Activated CD4-positive, alpha-beta T cell treated with anti-CD3 and anti-CD28 coated beads for 36 hours (primary cell): ENCODE measurements at regions of chr1 and their contacts with region 1.

Region 1: GRCh38 chr1:181002582-181003172 is 20.0 kb downstream of the STX6 start:
- DNase-seq: no peak
- ATAC-seq: no peak
- H3K4me3 Mint-ChIP-seq: no peak overlapping the region
- H3K27ac Mint-ChIP-seq: no peak overlapping the region
- H3K4me1 Mint-ChIP-seq: peaks cover 4% of the 10 kb centered on the region
- H3K27me3 Mint-ChIP-seq: no peaks in the 10 kb centered on the region

Region 2: DNA sequence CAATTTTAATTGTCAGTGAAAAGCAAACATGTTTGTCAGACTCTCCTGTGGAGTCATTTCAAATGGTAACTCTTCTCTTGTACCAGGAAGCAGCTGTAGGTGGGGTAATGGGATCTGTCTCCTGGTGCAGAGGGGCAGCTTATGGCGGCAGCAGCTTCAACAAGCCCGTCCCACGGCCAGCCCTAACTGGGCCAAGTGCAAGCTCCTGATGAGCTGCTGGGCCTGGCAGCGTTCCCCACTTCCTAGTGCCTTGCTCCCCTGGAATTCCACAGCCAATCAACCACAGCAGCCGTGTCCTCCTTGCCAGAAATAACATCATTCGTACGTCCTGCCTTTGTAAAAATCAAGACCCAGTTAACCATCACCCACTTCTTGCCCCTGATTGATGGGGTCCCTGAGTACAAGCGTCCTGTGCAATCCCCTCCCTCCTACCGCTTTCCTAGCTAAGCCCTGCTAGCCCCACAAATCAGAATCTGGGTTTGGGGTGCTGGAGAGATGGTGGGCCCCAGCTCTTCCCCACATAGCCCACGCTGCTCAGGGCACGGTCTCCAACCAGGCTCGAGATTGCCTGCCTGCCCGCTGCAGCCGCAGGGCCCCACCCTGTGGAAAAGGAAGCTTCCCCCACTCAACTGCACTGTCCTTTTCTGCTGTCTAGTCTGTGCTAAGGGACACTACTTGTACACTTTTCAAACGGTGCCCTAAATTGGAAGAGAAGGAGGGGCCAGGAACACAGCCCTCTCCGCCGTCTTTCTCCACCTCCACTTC is 1186.3 kb before region 1 on chr1:
- CTCF ChIA-PET with region 1: no interaction called
- POLR2A ChIA-PET with region 1: no interaction called
- intact Hi-C with region 1: loop called in 1 of 2 experiments (anchors 5 kb)
- DNase-seq: no peak
- ATAC-seq: no peak
- H3K4me3 Mint-ChIP-seq: peak overlapping the region; percentile 84
- H3K27ac Mint-ChIP-seq: no peak overlapping the region
- H3K4me1 Mint-ChIP-seq: peaks cover 17% of the 10 kb centered on the region
- H3K27me3 Mint-ChIP-seq: no peaks in the 10 kb centered on the region

Region 3: DNA sequence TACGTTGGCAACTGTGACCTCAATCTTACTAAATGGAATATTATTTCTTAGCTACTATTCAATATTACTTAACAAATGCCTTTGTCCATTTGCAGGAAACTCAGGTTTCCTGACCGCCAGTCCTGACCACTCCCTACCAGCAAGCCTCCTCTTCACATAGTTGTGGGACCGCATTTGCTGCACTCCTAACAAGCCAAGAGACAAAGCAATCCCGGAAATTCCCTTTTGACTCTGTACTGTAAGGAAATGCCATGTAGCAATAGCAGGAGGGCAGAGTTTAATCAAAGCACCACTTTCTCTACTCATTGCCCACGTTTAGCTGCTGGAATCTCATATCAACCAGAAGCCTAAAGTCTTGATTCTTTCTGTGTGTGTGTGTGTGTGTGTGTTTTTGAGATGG is 472.2 kb before region 1 on chr1:
- CTCF ChIA-PET with region 1: no interaction called
- POLR2A ChIA-PET with region 1: no interaction called
- intact Hi-C with region 1: no loop called
- DNase-seq: no peak
- ATAC-seq: no peak
- H3K4me3 Mint-ChIP-seq: no peak overlapping the region
- H3K27ac Mint-ChIP-seq: no peak overlapping the region
- H3K4me1 Mint-ChIP-seq: peaks cover 2% of the 10 kb centered on the region
- H3K27me3 Mint-ChIP-seq: no peaks in the 10 kb centered on the region